Activated CD8-positive, alpha-beta T cell treated with anti-CD3 and anti-CD28 coated beads for 36 hours (primary cell): ENCODE measurements at regions of chr11 and their contacts with region 1.

Region 1: GRCh38 chr11:133927690-133928627 is 28.8 kb downstream of the IGSF9B start:
- DNase-seq: peak; percentile 70
- ATAC-seq: peak; percentile 44
- H3K4me3 Mint-ChIP-seq: peak overlapping the region; percentile 62
- H3K27ac Mint-ChIP-seq: peak overlapping the region; percentile 90
- H3K4me1 Mint-ChIP-seq: peaks cover 38% of the 10 kb centered on the region
- H3K27me3 Mint-ChIP-seq: no peaks in the 10 kb centered on the region
- CTCF ChIP-seq: peak; percentile 80

Region 2: GRCh38 chr11:133811850-133812685 is 115.9 kb before region 1 on chr11:
- CTCF ChIA-PET with region 1: no interaction called
- POLR2A ChIA-PET with region 1: no interaction called
- intact Hi-C with region 1: no loop called
- DNase-seq: no peak
- ATAC-seq: no peak
- H3K4me3 Mint-ChIP-seq: no peak overlapping the region
- H3K27ac Mint-ChIP-seq: no peak overlapping the region
- H3K4me1 Mint-ChIP-seq: no peaks in the 10 kb centered on the region
- H3K27me3 Mint-ChIP-seq: peaks cover 8% of the 10 kb centered on the region
- CTCF ChIP-seq: no peak

Region 3: DNA sequence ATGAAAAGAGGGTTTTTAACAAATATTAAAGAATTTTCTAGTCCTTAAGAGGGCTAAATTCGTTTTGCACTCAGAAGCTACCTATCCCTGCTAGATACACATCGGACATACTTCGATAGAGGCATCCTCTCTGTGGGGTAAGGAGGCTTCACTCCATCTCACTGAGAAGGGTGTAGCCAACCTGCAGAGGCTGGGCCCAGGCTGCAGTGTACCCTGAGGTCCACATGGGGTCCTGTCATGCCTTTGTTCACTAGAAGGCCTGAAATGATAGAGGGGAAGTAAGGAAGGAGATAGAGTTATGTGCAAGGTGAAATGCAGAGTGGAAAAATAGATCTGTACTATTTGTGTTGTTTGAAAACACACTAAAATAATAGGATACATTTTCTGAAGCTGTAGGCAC is 16.8 kb before region 1 on chr11:
- CTCF ChIA-PET with region 1: interaction called, 10 read pairs
- POLR2A ChIA-PET with region 1: no interaction called
- intact Hi-C with region 1: no loop called
- DNase-seq: peak; percentile 31
- ATAC-seq: peak; percentile 49
- H3K4me3 Mint-ChIP-seq: no peak overlapping the region
- H3K27ac Mint-ChIP-seq: no peak overlapping the region
- H3K4me1 Mint-ChIP-seq: no peaks in the 10 kb centered on the region
- H3K27me3 Mint-ChIP-seq: no peaks in the 10 kb centered on the region
- CTCF ChIP-seq: no peak

Region 4: GRCh38 chr11:133947321-133947756 is 19.4 kb after region 1 on chr11:
- CTCF ChIA-PET with region 1: interaction called, 30 read pairs
- POLR2A ChIA-PET with region 1: interaction called, 19 read pairs
- intact Hi-C with region 1: loop called (anchors 1 kb)
- DNase-seq: peak; percentile 83
- ATAC-seq: peak; percentile 43
- H3K4me3 Mint-ChIP-seq: peak overlapping the region; percentile 81
- H3K27ac Mint-ChIP-seq: peak overlapping the region; percentile 75
- H3K4me1 Mint-ChIP-seq: peaks cover 65% of the 10 kb centered on the region
- H3K27me3 Mint-ChIP-seq: no peaks in the 10 kb centered on the region
- CTCF ChIP-seq: peak; percentile 39

Region 5: DNA sequence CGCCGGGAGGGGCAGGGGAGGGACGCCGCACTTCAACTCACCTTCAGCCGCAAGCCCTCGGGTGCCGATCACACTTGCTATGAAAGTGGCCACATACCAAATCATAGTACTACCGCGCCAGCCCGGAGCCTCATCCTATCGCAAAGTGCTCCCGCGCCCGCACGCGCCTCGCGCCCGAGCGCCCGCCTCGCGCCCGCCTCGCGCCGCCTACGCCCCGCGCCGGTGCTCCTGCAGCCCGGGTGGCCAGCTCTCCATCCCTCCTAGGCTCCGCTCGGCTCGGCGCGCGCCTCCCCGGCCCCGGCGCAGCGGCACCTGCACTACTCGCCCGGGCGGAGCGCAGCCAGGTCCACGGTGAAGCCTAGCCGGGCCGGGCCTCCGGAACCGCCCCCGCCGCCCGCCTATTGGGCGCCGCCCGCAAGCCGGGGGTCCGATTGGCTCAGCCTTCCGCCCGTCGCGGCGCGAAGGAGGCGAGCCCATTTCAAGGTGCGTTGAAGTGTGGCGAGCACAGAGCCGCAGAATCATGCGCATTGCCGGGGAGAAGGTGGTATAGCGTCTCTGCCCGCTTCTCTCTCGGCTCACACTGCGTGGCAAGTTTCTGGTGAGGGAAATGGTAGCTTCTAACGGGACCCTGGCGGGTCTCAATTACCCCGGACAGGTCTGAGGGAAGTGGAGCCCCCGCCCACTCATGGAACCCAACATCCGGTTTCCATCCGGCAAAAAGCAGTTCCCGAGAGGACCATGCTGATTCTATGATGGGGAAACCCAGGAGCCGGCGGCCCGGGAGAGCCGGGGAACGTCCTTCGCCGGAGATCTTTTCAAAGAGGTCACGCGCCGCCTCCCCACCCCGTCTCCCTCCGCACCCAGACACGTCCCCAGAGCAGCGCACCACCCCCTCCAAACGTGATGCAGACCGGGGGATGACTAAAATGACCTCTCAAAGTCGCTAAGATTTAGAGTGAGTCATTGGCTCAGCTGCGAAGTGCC is 29.0 kb after region 1 on chr11 and contains the start of gene IGSF9B:
- CTCF ChIA-PET with region 1: interaction called, 25 read pairs
- POLR2A ChIA-PET with region 1: interaction called, 4 read pairs
- intact Hi-C with region 1: no loop called
- DNase-seq: peak; percentile 94
- ATAC-seq: peak; percentile 91
- H3K4me3 Mint-ChIP-seq: peak within 1 kb of the TSS; percentile 89
- H3K27ac Mint-ChIP-seq: peak within 1 kb of the TSS; percentile 92
- H3K4me1 Mint-ChIP-seq: peaks cover 44% of the 10 kb centered on the region
- H3K27me3 Mint-ChIP-seq: peaks cover 12% of the 10 kb centered on the region
- CTCF ChIP-seq: no peak
- total RNA-seq, gene IGSF9B: 124 to 136 TPM

Region 6: DNA sequence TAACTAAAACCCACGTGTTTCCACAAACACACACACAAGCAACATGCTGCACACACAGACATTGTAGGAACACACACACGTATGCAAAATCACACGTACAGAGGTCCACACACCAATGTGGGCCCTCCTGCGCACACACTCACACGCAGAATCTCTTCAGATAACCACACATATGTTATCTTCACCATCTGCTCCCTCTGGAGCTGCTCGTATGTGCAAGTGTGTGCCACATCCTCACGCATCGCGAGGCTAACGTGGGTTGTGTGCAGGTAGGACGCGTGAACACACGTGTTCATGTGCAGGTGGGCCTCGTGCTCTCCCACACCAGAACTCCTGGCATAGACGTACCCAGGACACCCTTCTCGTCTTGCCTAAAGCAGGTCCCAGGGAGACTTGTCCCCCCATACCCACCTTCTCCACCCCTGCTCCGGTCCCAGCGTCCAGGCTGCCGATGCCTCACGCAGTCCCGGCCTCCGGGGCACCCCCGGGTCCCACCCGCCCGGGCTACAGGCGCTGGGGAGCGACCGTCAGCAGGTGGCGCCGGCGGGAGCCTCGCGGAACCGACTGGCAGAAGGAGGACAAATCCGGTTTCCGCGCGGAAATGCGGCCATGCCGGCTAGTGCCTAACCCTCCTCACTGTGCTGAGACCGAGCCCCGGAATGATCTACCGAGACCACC is 39.1 kb after region 1 on chr11:
- CTCF ChIA-PET with region 1: interaction called, 5 read pairs
- POLR2A ChIA-PET with region 1: no interaction called
- intact Hi-C with region 1: loop called (anchors 5 kb)
- DNase-seq: peak; percentile 87
- ATAC-seq: peak; percentile 92
- H3K4me3 Mint-ChIP-seq: peak overlapping the region; percentile 76
- H3K27ac Mint-ChIP-seq: peak overlapping the region; percentile 85
- H3K4me1 Mint-ChIP-seq: peaks cover 11% of the 10 kb centered on the region
- H3K27me3 Mint-ChIP-seq: peaks cover 2% of the 10 kb centered on the region
- CTCF ChIP-seq: peak; percentile 72

Region 7: GRCh38 chr11:134033696-134034491 is 105.9 kb after region 1 on chr11:
- CTCF ChIA-PET with region 1: interaction called, 8 read pairs
- POLR2A ChIA-PET with region 1: interaction called, 3 read pairs
- intact Hi-C with region 1: loop called (anchors 5 kb)
- DNase-seq: peak; percentile 87
- ATAC-seq: peak; percentile 90
- H3K4me3 Mint-ChIP-seq: peak overlapping the region; percentile 50
- H3K27ac Mint-ChIP-seq: peak overlapping the region; percentile 69
- H3K4me1 Mint-ChIP-seq: peaks cover 60% of the 10 kb centered on the region
- H3K27me3 Mint-ChIP-seq: no peaks in the 10 kb centered on the region
- CTCF ChIP-seq: no peak

Region 8: DNA sequence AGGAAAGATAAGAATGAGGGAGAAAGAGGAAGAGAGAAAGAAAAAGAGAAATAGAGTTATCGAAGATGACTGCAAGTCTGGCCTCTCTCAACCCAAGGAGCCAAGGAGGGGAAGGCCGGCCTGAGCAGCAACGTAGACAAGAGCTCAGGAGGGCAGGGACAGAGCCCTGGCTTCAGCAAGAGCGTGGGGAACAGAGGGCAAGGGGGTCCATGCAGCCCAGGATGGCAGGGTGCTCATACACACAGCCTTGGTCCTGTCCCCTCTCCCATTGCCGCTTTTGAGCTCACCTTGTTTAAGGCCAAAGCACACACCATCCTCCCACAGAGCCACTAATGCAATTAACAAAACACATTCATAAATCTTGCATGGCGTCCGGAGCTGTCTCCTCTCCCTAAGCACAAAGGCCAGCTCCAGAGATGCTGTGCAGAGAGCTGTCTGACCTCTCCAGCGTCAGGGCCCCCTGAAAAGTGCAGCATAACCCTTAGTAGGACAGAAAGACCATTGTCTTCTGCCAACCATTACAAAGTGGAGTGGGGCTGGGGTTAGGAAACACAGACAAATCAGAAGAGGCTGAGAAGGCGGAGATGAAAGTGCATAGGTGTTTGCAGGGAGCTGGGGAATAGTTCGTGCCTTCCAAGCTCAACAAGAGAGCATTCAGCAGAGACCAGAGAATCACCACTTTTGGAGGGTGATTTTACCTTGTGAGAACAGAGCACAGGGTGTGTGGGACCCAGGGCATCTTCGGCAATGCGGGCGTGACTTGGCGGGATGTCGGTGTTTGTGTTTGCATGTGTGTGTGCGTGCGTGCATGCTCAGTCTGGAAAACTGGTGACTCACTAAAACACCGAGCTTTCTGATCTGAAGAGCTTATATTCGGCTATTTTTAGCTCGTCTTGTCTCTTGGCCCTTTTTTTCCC is 112.7 kb after region 1 on chr11:
- CTCF ChIA-PET with region 1: interaction called, 14 read pairs
- POLR2A ChIA-PET with region 1: interaction called, 6 read pairs
- intact Hi-C with region 1: loop called (anchors 5 kb)
- DNase-seq: no peak
- ATAC-seq: no peak
- H3K4me3 Mint-ChIP-seq: no peak overlapping the region
- H3K27ac Mint-ChIP-seq: no peak overlapping the region
- H3K4me1 Mint-ChIP-seq: peaks cover 17% of the 10 kb centered on the region
- H3K27me3 Mint-ChIP-seq: no peaks in the 10 kb centered on the region
- CTCF ChIP-seq: no peak